ENCODE measurements at regions of chr18 and their contacts with region 1.

Region 1: GRCh38 chr18:59459369-59460079 is 100.5 kb upstream of the LMAN1 start:
- DNase-seq: no peak
- H3K4me3 ChIP-seq: no peak overlapping the region
- H3K27ac ChIP-seq: no peak overlapping the region
- H3K4me1 ChIP-seq: peaks cover 0 to 2% (median 0%) of the 10 kb centered on the region in 4 experiments; a peak in 1 of 7 replicates
- H3K27me3 ChIP-seq: no peaks in the 10 kb centered on the region
- CTCF ChIP-seq: peak in 2 of 3 experiments; percentile 25 to 60; a peak in 2 of 4 replicates
- EP300 ChIP-seq: no peak
- POLR2A ChIP-seq: no peak
- RAD21 ChIP-seq: peak; percentile 71 to 76

Region 2: GRCh38 chr18:59446012-59446411 is 13.5 kb before region 1 on chr18:
- CTCF ChIA-PET with region 1: interaction called, 40 read pairs
- POLR2A ChIA-PET with region 1: interaction called, 3 read pairs
- DNase-seq: no peak
- H3K4me3 ChIP-seq: no peak overlapping the region
- H3K27ac ChIP-seq: no peak overlapping the region
- H3K4me1 ChIP-seq: peaks cover 0 to 4% (median 1%) of the 10 kb centered on the region in 4 experiments; a peak in 2 of 7 replicates
- H3K27me3 ChIP-seq: no peaks in the 10 kb centered on the region
- CTCF ChIP-seq: no peak
- EP300 ChIP-seq: no peak
- POLR2A ChIP-seq: no peak
- RAD21 ChIP-seq: peak; percentile 19 to 31; a peak in 3 of 4 replicates

Region 3: GRCh38 chr18:59509481-59510442 is 50.2 kb after region 1 on chr18:
- CTCF ChIA-PET with region 1: interaction called, 10 read pairs
- POLR2A ChIA-PET with region 1: no interaction called
- DNase-seq: no peak
- H3K4me3 ChIP-seq: no peak overlapping the region
- H3K27ac ChIP-seq: no peak overlapping the region
- H3K4me1 ChIP-seq: no peaks in the 10 kb centered on the region
- H3K27me3 ChIP-seq: no peaks in the 10 kb centered on the region
- CTCF ChIP-seq: no peak
- EP300 ChIP-seq: no peak
- POLR2A ChIP-seq: no peak
- RAD21 ChIP-seq: no peak

Region 4: DNA sequence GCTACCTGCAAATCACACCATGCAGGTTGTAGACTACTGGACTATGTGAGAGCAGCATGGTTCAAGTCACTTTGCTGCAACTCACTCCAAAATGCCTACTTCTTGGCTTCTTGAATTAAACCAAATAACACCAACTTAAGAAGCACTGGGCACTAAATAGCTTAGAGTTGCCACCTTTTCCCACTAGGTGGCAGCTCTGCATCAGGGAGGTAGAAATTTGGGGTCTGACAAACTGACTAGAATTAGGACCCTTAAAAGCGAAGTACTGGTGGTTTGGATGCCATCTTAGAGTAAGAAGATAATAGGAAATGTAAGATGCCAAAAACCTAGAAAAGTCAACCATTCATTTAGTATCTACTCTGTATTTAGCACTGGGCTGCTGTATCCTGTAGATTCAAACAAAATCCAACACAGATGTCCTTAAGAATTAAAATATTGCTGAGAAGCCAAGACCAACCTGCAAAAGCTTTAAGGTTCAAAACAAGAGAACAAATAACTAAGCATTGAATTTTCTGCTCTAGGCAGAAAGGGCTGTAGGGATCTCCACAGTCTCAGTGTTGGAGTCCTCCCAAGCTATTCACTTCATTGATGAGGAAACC is 172.2 kb after region 1 on chr18:
- CTCF ChIA-PET with region 1: interaction called, 44 read pairs
- POLR2A ChIA-PET with region 1: no interaction called
- DNase-seq: peak in 1 of 2 experiments; percentile 59
- H3K4me3 ChIP-seq: no peak overlapping the region
- H3K27ac ChIP-seq: no peak overlapping the region
- H3K4me1 ChIP-seq: peaks cover 0 to 9% (median 3%) of the 10 kb centered on the region in 4 experiments; a peak in 4 of 7 replicates
- H3K27me3 ChIP-seq: no peaks in the 10 kb centered on the region
- CTCF ChIP-seq: peak in 2 of 3 experiments; percentile 80 to 85; a peak in 3 of 4 replicates
- EP300 ChIP-seq: no peak
- POLR2A ChIP-seq: no peak
- RAD21 ChIP-seq: peak; percentile 94 to 95

Region 5: DNA sequence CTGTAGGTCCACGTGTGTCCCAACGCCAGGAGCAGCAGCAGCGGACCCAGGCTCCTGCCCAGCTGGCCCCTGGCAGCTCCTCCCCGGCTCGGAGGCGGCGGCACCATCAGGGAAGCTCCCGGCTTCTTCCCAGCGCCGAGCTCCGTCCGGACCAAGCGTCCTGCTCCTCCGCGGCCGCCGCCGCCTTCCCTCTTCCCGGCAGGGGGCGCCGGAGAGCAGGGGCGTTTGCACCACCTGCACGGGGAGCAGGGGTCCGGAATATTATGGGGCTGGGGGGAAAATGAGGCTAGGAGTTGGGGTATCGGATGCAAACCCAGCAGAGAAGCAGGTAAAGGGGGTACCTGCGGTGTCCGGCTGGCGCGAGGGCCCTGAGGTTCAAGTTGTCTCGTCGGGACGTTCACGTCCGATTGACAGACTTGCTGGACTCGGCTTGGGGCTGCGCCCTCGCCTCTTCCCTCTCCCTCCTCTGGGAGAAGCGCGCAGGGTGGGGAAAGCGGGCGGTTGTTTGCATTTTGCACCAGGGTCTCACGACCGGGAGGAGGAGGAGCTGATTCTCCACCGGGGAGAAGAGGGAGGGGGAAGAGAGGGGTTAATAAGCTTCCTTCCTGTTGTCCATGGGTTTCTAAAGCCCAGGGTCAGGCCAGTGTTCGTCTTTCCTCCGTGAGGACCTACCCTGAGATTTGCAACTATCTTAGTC is 237.9 kb after region 1 on chr18 and contains the start of gene CCBE1:
- CTCF ChIA-PET with region 1: interaction called, 27 read pairs
- POLR2A ChIA-PET with region 1: no interaction called
- DNase-seq: peak; percentile 49 to 96
- H3K4me3 ChIP-seq: peak within 1 kb of the TSS; percentile 65 to 80 (median 72)
- H3K27ac ChIP-seq: no peak within 1 kb of the TSS
- H3K4me1 ChIP-seq: peaks cover 7 to 34% (median 15%) of the 10 kb centered on the region in 4 experiments
- H3K27me3 ChIP-seq: peaks cover 7 to 35% (median 31%) of the 10 kb centered on the region in 4 experiments
- CTCF ChIP-seq: peak; percentile 81 to 88 (median 82)
- EP300 ChIP-seq: no peak
- POLR2A ChIP-seq: no peak
- RAD21 ChIP-seq: peak; percentile 55 to 68
- total RNA-seq, gene CCBE1: 2.6 and 4.4 TPM in 2 replicates